ENCODE measurements at regions of chr9 and their contacts with region 1.

Region 1: DNA sequence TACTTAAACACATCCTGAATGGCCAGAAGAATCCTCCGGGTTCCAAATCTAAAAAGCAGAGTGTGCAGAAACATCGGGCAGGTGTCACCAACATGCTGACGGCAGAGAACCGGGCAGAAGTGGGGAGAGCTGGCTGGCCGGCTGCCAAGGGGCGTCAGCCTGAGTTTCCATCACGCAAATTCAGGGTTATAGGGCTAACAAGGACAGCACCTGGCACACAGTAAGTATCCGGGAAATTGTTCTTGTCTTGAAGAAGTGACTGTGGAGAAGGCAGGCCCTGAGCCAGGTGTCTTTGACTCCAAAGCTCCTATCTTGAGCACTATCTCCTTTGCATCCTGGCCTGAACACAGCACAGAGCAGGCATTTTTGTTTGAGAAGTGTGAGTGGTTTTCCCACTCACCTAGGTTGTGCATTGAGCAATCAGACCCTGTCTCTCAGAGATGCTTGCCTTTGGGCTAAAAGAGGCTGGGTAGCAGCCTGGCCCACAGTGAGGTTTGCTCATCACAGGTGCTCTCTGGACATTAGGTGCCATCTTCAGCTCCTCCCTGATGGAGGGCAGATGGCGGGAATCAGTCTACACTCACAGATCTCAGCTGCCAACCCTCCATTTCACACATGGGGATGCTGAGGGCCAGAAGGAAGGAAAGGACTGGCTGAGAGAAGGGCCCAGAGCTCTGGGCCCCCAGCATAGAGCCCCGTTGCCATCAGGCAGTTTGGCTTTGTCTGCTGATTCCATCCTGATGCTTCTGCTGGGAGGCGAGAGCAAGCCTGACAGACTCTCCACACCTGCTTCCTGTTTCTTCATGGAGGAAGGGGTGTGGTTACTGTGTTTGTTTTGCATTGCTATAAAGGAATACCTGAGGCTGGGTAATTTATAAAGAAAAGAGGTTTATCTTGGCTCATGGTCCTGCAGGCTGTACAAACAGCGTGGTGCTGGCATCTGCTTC is 52.8 kb downstream of the WHRN start:
- DNase-seq: peak; percentile 82
- ATAC-seq: peak; percentile 46
- H3K4me3 ChIP-seq: peak overlapping the region in 3 of 5 experiments; percentile 1 to 44 (median 6)
- H3K4me3 Mint-ChIP-seq: peak overlapping the region; percentile 80
- H3K27ac ChIP-seq: peak overlapping the region; percentile 87 to 92
- H3K27ac Mint-ChIP-seq: peak overlapping the region; percentile 97
- H3K4me1 ChIP-seq: peaks cover 57 to 58% of the 10 kb centered on the region in 2 donors
- H3K4me1 Mint-ChIP-seq: peaks cover 57% of the 10 kb centered on the region
- H3K27me3 ChIP-seq: no peaks in the 10 kb centered on the region
- H3K27me3 Mint-ChIP-seq: no peaks in the 10 kb centered on the region
- CTCF ChIP-seq: no peak

Region 2: DNA sequence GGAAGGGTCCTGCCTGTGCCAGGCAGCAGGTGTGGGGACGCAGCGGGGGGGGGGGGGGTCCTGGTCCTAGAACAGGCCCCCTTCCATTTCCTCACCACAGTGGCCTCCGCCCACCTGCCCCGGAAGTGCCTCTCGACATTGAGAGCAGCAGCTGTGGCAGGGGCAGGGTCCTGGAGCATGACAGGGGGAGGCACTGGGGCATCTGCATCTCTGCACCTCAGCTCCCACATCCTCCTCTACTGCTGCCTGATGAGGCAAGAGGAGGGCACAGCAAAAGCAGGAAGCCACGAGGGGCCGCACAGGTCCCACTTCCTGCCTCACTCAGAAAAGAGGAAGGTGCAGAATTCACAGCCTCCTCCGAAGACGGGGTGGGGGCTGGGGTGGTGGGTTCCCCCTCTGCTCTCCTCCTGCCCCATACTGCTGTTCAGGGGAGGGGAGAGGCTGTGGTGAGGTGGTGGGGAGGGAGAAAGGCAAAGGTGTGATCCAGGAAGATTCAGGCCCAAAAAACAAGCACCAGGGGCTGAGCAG is 79.5 kb before region 1 on chr9:
- CTCF ChIA-PET with region 1: no interaction called
- POLR2A ChIA-PET with region 1: interaction called, 4 read pairs
- intact Hi-C with region 1: loop called (anchors 5 kb)
- DNase-seq: peak; percentile 96
- ATAC-seq: peak; percentile 93
- H3K4me3 ChIP-seq: peak overlapping the region in 3 of 5 experiments; percentile 13 to 33 (median 19)
- H3K4me3 Mint-ChIP-seq: peak overlapping the region; percentile 79
- H3K27ac ChIP-seq: peak overlapping the region; percentile 92 to 95
- H3K27ac Mint-ChIP-seq: peak overlapping the region; percentile 97
- H3K4me1 ChIP-seq: peaks cover 86 to 96% of the 10 kb centered on the region in 2 donors
- H3K4me1 Mint-ChIP-seq: peaks cover 91% of the 10 kb centered on the region
- H3K27me3 ChIP-seq: no peaks in the 10 kb centered on the region
- H3K27me3 Mint-ChIP-seq: no peaks in the 10 kb centered on the region
- CTCF ChIP-seq: no peak

Region 3: DNA sequence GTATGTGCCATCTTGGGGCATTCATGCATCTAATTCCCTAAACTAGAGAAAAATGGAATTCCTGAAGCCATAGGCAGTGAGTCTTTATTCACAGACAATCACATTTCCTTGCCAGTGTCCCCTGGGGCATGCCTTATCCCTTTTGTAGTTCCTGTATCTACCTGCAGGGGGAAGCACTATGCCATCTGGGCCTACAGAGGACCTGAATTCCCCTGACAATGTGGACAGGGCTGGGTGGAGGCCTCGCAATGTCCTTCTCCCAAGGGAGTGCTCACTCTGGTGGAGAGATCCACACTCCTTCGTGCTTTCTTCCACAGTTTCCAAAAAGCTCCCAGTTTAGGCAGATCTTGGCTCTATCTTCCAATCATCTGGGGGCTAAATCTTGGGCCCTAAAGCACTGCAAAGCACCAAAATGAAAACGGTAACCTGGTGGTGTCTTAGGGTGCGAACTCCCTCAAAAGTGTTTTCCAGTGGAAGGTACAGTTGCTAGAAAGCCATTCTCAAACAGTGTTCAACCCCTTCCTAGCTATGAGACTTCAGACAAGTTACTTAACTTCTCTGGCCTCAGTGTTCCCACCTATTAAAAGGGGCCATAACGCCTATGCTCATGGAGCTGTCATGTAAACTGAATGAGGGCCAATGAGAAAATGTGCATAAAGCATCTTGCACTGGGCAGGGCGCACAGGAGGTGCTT is 35.3 kb after region 1 on chr9:
- CTCF ChIA-PET with region 1: interaction called, 6 read pairs
- POLR2A ChIA-PET with region 1: no interaction called
- intact Hi-C with region 1: loop called (anchors 1 kb)
- DNase-seq: peak; percentile 81
- ATAC-seq: peak; percentile 75
- H3K4me3 ChIP-seq: no peak overlapping the region
- H3K4me3 Mint-ChIP-seq: no peak overlapping the region
- H3K27ac ChIP-seq: no peak overlapping the region
- H3K27ac Mint-ChIP-seq: peak overlapping the region; percentile 16
- H3K4me1 ChIP-seq: peaks cover 22 to 23% of the 10 kb centered on the region in 2 donors
- H3K4me1 Mint-ChIP-seq: peaks cover 40% of the 10 kb centered on the region
- H3K27me3 ChIP-seq: no peaks in the 10 kb centered on the region
- H3K27me3 Mint-ChIP-seq: no peaks in the 10 kb centered on the region
- CTCF ChIP-seq: peak; percentile 90

Region 4: DNA sequence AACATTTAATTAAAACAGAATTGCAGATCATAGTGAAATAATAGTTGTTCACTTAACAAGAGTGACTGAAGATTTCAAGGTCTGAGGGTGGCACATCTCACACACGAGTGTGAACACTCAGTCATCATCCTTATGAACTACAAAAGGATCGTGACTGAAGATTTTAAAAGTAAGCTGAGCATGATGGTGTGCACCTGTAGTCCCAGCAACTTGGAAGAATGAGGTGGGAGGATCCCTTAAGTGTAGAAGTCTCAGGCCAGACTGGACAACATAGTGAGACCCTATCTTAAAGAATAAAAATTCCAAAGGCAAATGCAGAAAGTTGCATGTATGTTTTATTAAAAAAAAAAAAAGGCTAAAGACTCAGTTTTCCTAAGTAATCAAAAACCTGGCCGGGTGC is 112.7 kb after region 1 on chr9:
- CTCF ChIA-PET with region 1: no interaction called
- POLR2A ChIA-PET with region 1: interaction called, 4 read pairs
- intact Hi-C with region 1: loop called (anchors 5 kb)
- DNase-seq: no peak
- ATAC-seq: no peak
- H3K4me3 ChIP-seq: no peak overlapping the region
- H3K4me3 Mint-ChIP-seq: peak overlapping the region; percentile 67
- H3K27ac ChIP-seq: no peak overlapping the region
- H3K27ac Mint-ChIP-seq: no peak overlapping the region
- H3K4me1 ChIP-seq: peaks cover 23 to 26% of the 10 kb centered on the region in 2 donors
- H3K4me1 Mint-ChIP-seq: peaks cover 32% of the 10 kb centered on the region
- H3K27me3 ChIP-seq: no peaks in the 10 kb centered on the region
- H3K27me3 Mint-ChIP-seq: no peaks in the 10 kb centered on the region
- CTCF ChIP-seq: no peak

Measured in B cell (primary cell).